ENCODE measurements at regions of chr3 and their contacts with region 1.

Region 1: DNA sequence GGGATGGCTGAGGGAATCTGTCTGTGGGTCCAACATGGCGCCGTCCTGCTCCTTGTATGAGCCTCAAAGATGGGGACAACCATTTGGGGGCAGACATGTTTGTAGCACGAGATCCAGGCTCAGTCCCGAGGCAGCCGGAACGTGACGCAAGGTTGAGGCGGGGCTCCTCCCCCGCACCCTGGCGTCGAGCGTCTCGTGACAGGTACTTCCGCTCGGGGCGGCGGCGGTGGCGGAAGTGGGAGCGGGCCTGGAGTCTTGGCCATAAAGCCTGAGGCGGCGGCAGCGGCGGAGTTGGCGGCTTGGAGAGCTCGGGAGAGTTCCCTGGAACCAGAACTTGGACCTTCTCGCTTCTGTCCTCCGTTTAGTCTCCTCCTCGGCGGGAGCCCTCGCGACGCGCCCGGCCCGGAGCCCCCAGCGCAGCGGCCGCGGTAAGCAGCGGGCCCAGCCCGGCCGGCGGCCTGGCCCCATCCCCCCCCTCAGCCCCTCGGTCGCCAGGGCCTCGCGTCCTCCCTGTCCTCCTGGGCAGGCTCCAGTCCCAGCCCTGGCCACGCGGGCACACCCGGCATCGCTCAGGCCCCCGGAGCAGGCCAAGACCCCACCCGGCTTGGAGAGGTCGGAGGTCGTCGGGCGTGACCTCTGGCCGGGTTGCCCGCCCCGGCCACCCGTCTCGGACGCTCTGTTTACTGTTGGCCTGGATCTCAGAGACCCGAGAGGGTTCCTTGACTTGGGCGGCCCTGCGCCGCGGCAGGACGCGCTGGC is at the start of gene RAB7A:
- DNase-seq: peak; percentile 95 to 99 (median 97)
- ATAC-seq: peak; percentile 98
- H3K4me3 ChIP-seq: peak within 1 kb of the TSS; percentile 82 to 83
- H3K4me3 Mint-ChIP-seq: peak within 1 kb of the TSS; percentile 97
- H3K27ac ChIP-seq: peak within 1 kb of the TSS; percentile 92
- H3K27ac Mint-ChIP-seq: peak within 1 kb of the TSS; percentile 95
- H3K4me1 ChIP-seq: peaks cover 41% of the 10 kb centered on the region
- H3K4me1 Mint-ChIP-seq: peaks cover 53% of the 10 kb centered on the region
- H3K27me3 ChIP-seq: no peaks in the 10 kb centered on the region
- H3K27me3 Mint-ChIP-seq: no peaks in the 10 kb centered on the region
- CTCF ChIP-seq: no peak
- total RNA-seq, gene RAB7A: 130 to 134 TPM

Region 2: GRCh38 chr3:128650096-128651050 is 75.7 kb before region 1 on chr3 and contains the start of gene RPN1:
- CTCF ChIA-PET with region 1: no interaction called
- POLR2A ChIA-PET with region 1: no interaction called
- intact Hi-C with region 1: loop called (anchors 1 kb)
- DNase-seq: peak; percentile 90 to 97 (median 95)
- ATAC-seq: peak; percentile 96
- H3K4me3 ChIP-seq: peak within 1 kb of the TSS; percentile 97
- H3K4me3 Mint-ChIP-seq: peak within 1 kb of the TSS; percentile 82
- H3K27ac ChIP-seq: peak within 1 kb of the TSS; percentile 95 to 96
- H3K27ac Mint-ChIP-seq: peak within 1 kb of the TSS; percentile 88
- H3K4me1 ChIP-seq: peaks cover 24% of the 10 kb centered on the region
- H3K4me1 Mint-ChIP-seq: peaks cover 47% of the 10 kb centered on the region
- H3K27me3 ChIP-seq: no peaks in the 10 kb centered on the region
- H3K27me3 Mint-ChIP-seq: no peaks in the 10 kb centered on the region
- CTCF ChIP-seq: no peak
- total RNA-seq, gene RPN1: 65.7 to 76.5 TPM

Region 3: GRCh38 chr3:128794770-128795649 is 68.9 kb after region 1 on chr3:
- CTCF ChIA-PET with region 1: interaction called, 23 read pairs
- POLR2A ChIA-PET with region 1: interaction called, 3 read pairs
- intact Hi-C with region 1: loop called (anchors 2 kb)
- DNase-seq: peak; percentile 32 to 85 (median 64)
- ATAC-seq: peak; percentile 99
- H3K4me3 ChIP-seq: no peak overlapping the region
- H3K4me3 Mint-ChIP-seq: peak overlapping the region; percentile 9
- H3K27ac ChIP-seq: peak overlapping the region in 1 of 2 experiments; percentile 17
- H3K27ac Mint-ChIP-seq: peak overlapping the region; percentile 80
- H3K4me1 ChIP-seq: peaks cover 44% of the 10 kb centered on the region
- H3K4me1 Mint-ChIP-seq: peaks cover 55% of the 10 kb centered on the region
- H3K27me3 ChIP-seq: no peaks in the 10 kb centered on the region
- H3K27me3 Mint-ChIP-seq: no peaks in the 10 kb centered on the region
- CTCF ChIP-seq: peak; percentile 81

Region 4: GRCh38 chr3:128804017-128804810 is 78.1 kb after region 1 on chr3:
- CTCF ChIA-PET with region 1: no interaction called
- POLR2A ChIA-PET with region 1: interaction called, 4 read pairs
- intact Hi-C with region 1: loop called (anchors 2 kb)
- DNase-seq: peak in 8 of 9 experiments; percentile 26 to 92 (median 56)
- ATAC-seq: peak; percentile 95
- H3K4me3 ChIP-seq: peak overlapping the region; percentile 21 to 36
- H3K4me3 Mint-ChIP-seq: peak overlapping the region; percentile 75
- H3K27ac ChIP-seq: peak overlapping the region; percentile 66 to 84
- H3K27ac Mint-ChIP-seq: peak overlapping the region; percentile 97
- H3K4me1 ChIP-seq: peaks cover 49% of the 10 kb centered on the region
- H3K4me1 Mint-ChIP-seq: peaks cover 69% of the 10 kb centered on the region
- H3K27me3 ChIP-seq: no peaks in the 10 kb centered on the region
- H3K27me3 Mint-ChIP-seq: no peaks in the 10 kb centered on the region
- CTCF ChIP-seq: no peak

Region 5: DNA sequence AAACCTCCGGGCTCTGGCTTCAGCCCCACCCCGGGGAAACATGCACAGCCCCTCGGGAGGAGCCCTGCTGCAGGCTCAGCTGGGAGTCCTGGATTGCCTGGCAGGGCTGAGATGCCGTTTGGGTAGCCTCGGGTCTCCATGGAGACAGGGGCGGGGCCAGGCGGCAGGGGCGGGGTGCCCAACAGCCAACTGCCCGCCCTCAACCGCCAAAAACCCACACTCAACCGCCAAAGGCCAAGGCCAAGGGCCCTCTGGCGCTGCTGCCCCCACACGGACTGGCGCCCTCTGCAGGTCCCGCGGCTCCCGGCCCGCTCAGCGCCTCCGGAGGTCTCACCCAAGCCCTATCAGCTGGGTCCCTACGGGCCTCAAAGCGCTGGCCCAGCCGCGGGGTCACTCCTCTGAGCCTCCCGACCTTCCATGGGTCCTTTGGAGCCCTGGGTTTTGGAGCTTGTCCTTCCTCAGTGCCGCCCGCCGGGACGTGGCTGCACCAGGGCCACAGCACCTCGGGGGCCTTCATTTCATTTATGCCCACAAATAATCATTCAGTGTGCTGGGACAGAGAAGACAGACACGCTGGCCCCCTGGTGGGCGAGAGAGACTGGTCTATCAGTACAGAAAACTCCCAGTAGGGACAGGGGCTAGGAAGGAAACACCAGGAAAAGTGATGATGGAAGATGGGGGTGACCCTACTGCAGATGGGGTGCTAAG is 119.8 kb after region 1 on chr3:
- CTCF ChIA-PET with region 1: interaction called, 3 read pairs
- POLR2A ChIA-PET with region 1: no interaction called
- intact Hi-C with region 1: loop called in 1 of 2 experiments (anchors 1 kb)
- DNase-seq: peak; percentile 58 to 85 (median 79)
- ATAC-seq: peak; percentile 82
- H3K4me3 ChIP-seq: peak overlapping the region; percentile 51 to 74
- H3K4me3 Mint-ChIP-seq: peak overlapping the region; percentile 80
- H3K27ac ChIP-seq: peak overlapping the region; percentile 17 to 45
- H3K27ac Mint-ChIP-seq: peak overlapping the region; percentile 78
- H3K4me1 ChIP-seq: peaks cover 19% of the 10 kb centered on the region
- H3K4me1 Mint-ChIP-seq: peaks cover 9% of the 10 kb centered on the region
- H3K27me3 ChIP-seq: no peaks in the 10 kb centered on the region
- H3K27me3 Mint-ChIP-seq: no peaks in the 10 kb centered on the region
- CTCF ChIP-seq: peak; percentile 75

Region 6: DNA sequence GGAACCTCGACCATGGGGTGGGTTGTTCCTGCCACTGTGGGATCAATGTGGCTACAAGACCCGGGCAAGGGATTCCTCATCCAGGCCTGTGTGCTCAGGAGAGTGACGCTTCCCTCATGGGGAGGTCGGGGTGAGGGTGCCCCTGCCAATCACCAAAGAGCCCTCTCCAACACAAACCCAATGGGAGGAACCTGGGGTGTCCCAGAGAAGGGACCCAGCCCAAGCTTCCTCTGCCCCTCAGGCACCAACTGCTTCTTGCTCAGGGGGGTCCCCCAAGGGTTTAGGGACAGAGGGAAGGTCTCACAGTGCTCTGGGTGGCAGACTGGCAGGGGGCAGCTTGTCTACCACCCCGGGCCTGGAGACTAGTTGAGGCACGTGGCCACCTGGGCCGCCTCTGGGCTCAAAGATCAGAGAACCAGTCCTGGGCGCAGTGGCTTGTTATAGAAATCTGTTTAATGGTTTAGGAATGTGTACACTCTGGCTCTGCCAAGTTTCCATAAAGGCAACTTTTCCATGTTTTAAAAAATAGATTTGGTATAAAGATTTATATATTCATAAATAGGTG is 361.1 kb after region 1 on chr3:
- CTCF ChIA-PET with region 1: no interaction called
- POLR2A ChIA-PET with region 1: no interaction called
- intact Hi-C with region 1: no loop called
- DNase-seq: no peak
- ATAC-seq: no peak
- H3K4me3 ChIP-seq: no peak overlapping the region
- H3K4me3 Mint-ChIP-seq: no peak overlapping the region
- H3K27ac ChIP-seq: no peak overlapping the region
- H3K27ac Mint-ChIP-seq: no peak overlapping the region
- H3K4me1 ChIP-seq: peaks cover 5% of the 10 kb centered on the region
- H3K4me1 Mint-ChIP-seq: peaks cover 10% of the 10 kb centered on the region
- H3K27me3 ChIP-seq: no peaks in the 10 kb centered on the region
- H3K27me3 Mint-ChIP-seq: no peaks in the 10 kb centered on the region
- CTCF ChIP-seq: no peak

Region 7: DNA sequence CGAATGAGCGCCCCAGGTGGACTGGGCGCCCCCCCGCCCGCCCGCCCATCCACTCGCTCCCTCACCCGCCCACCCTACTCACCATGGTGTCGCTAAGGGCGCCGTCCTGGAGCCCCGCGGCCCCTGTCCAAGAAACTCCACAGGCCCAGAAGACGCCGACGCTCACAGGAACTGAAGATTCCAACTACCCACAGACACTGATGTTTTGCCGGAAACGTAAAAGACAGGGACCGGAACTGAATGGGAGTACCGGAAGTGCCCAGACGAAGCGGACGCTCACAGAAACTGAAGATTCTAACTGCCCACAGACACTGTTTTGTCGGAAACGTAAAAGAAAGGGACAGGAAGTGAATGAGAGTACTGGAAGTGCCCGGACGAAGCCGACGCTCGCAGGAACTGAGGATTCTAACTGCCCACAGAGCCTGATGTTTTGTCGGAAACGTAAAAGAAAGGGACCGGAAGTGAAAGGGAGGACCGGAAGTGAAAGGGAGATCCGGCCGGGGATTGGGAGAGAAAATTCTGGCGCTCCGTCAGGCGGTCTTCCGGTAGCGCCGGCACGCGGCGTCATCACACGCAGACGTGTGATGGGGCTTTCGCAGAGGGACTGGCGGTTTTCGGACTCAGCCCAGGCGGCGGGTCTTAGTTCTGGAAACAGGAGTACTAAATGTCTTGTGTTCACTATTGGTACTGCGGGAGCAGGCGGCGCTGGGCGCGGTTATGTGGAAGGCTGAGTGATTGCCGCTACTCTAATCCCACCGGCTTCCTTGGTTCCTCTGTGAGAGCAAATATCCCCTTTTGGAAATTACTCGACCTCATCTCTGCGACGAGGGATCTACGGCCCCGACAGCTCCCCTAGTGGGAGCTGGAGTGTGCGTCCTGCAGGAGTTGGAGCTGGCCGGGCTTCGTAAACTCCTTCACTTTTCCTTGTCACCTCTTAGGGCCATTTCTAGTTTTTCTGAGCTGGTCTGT is 435.1 kb after region 1 on chr3 and contains the start of gene ISY1:
- CTCF ChIA-PET with region 1: no interaction called
- POLR2A ChIA-PET with region 1: no interaction called
- intact Hi-C with region 1: loop called in 1 of 2 experiments (anchors 1 kb)
- DNase-seq: peak; percentile 71 to 97 (median 86)
- ATAC-seq: peak; percentile 80
- H3K4me3 ChIP-seq: peak within 1 kb of the TSS; percentile 84 to 94
- H3K4me3 Mint-ChIP-seq: peak within 1 kb of the TSS; percentile 95
- H3K27ac ChIP-seq: peak within 1 kb of the TSS; percentile 92 to 99
- H3K27ac Mint-ChIP-seq: peak within 1 kb of the TSS; percentile 96
- H3K4me1 ChIP-seq: peaks cover 18% of the 10 kb centered on the region
- H3K4me1 Mint-ChIP-seq: peaks cover 43% of the 10 kb centered on the region
- H3K27me3 ChIP-seq: no peaks in the 10 kb centered on the region
- H3K27me3 Mint-ChIP-seq: no peaks in the 10 kb centered on the region
- CTCF ChIP-seq: peak; percentile 70
- total RNA-seq, gene ISY1: 35.2 to 38.7 TPM

Region 8: DNA sequence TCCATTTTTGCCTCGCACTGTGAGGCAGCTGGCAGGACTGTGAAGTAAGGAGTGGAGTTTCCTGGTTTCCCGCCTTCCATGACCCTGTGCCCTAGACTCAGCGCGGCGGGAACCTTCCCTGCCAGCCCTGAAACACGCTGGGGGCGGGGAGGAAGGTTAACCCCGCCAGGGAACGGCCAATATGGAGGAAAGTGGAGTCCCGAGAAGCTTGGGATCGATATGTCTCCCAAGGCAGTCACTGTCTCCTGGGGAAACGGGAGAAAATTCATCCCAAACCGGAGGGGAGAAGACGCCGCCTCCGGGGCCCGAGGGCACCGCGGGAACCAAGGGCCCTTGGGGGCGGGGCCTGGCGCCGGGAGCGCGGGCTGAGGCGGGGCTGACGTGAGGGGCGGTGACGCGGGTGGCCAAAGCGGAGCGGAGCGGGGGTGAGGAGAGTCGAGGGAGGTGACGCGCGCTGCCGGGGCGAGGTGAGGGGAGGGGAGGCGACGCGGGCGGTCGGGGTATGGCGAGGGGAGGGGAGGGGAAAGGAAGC is 552.4 kb after region 1 on chr3 and contains the start of gene HMCES:
- CTCF ChIA-PET with region 1: no interaction called
- POLR2A ChIA-PET with region 1: no interaction called
- intact Hi-C with region 1: loop called in 1 of 2 experiments (anchors 5 kb)
- DNase-seq: peak; percentile 88 to 98 (median 96)
- ATAC-seq: peak; percentile 94
- H3K4me3 ChIP-seq: peak within 1 kb of the TSS; percentile 59 to 92
- H3K4me3 Mint-ChIP-seq: peak within 1 kb of the TSS; percentile 95
- H3K27ac ChIP-seq: peak within 1 kb of the TSS; percentile 88 to 93
- H3K27ac Mint-ChIP-seq: peak within 1 kb of the TSS; percentile 97
- H3K4me1 ChIP-seq: peaks cover 39% of the 10 kb centered on the region
- H3K4me1 Mint-ChIP-seq: peaks cover 42% of the 10 kb centered on the region
- H3K27me3 ChIP-seq: no peaks in the 10 kb centered on the region
- H3K27me3 Mint-ChIP-seq: no peaks in the 10 kb centered on the region
- CTCF ChIP-seq: no peak
- total RNA-seq, gene HMCES: 69.5 to 78.7 TPM

Measured in CD8-positive, alpha-beta T cell (primary cell).